BJ (cell line): ENCODE measurements at regions of chr4 and their contacts with region 1.

Region 1: GRCh38 chr4:108060164-108060563 is 70.5 kb downstream of the HADH start:
- DNase-seq: no peak
- H3K4me3 ChIP-seq: no peak overlapping the region
- H3K27me3 ChIP-seq: no peaks in the 10 kb centered on the region
- CTCF ChIP-seq: no peak

Region 2: GRCh38 chr4:107863850-107864371 is 196.3 kb before region 1 on chr4:
- CTCF ChIA-PET with region 1: no interaction called
- POLR2A ChIA-PET with region 1: no interaction called
- DNase-seq: no peak
- H3K4me3 ChIP-seq: no peak overlapping the region
- H3K27me3 ChIP-seq: no peaks in the 10 kb centered on the region
- CTCF ChIP-seq: no peak

Region 3: DNA sequence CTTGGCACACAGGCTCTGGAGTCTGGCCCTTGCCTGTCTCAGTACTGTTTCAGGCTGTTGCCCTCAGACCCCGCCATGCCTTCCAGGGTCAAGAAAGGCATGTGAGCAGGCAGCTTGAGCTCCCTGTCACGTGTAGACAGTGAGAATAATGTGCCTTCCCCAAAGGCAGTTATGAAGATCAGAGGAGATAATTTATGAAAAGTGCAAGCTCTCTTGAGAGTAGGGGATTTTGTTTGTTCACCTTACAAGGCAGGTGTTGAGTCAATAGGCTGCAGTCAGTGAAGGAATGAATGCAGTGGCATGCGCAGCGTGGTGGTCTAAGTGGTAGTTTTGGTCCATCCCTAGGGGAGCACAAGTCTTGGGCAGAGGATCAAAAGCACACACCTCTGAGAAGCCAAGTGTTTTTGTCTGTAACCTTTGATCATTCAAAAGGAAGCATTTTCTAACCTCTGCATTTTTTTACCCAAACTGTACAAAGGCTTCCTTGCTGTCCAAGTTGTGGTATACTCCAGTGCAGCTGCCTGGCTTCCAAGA is 56.1 kb before region 1 on chr4:
- CTCF ChIA-PET with region 1: no interaction called
- POLR2A ChIA-PET with region 1: no interaction called
- DNase-seq: no peak
- H3K4me3 ChIP-seq: no peak overlapping the region
- H3K27me3 ChIP-seq: no peaks in the 10 kb centered on the region
- CTCF ChIP-seq: no peak

Region 4: GRCh38 chr4:108018040-108018883 is 41.9 kb before region 1 on chr4:
- CTCF ChIA-PET with region 1: interaction called, 18 read pairs
- POLR2A ChIA-PET with region 1: no interaction called
- DNase-seq: peak; percentile 18
- H3K4me3 ChIP-seq: no peak overlapping the region
- H3K27me3 ChIP-seq: no peaks in the 10 kb centered on the region
- CTCF ChIP-seq: peak; percentile 82

Region 5: GRCh38 chr4:108683479-108683878 is 623.3 kb after region 1 on chr4:
- CTCF ChIA-PET with region 1: no interaction called
- POLR2A ChIA-PET with region 1: interaction called, 14 read pairs
- DNase-seq: no peak
- H3K4me3 ChIP-seq: no peak overlapping the region
- H3K27me3 ChIP-seq: no peaks in the 10 kb centered on the region
- CTCF ChIP-seq: peak; percentile 26; the same call in 1 of the 2 replicates